ENCODE measurements at regions of chr12 and their contacts with region 1.

Region 1: GRCh38 chr12:71780237-71780822 is 25.7 kb downstream of the RAB21 start:
- DNase-seq: no peak
- H3K4me3 ChIP-seq: no peak overlapping the region
- CTCF ChIP-seq: peak; percentile 41

Region 2: DNA sequence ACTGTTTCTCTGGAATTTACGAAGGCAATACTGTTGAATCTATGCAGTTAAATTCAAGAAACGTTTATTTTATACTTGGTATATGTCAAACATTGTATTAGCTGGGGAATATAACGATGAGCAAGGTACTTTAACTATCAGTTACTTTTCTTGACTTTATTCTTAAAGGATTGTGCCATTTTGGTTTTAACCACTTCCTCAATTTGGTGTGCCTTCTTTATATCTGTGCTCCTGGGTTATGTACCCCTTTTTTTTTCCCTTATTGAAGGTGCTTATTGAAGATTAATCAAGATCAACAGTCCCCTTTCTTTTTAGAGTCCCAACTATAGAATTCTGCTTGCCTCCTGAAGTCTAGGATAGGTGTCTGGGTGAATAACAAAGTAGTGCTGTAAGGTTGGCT is 19.9 kb before region 1 on chr12:
- CTCF ChIA-PET with region 1: interaction called, 20 read pairs
- POLR2A ChIA-PET with region 1: interaction called, 3 read pairs
- DNase-seq: no peak
- H3K4me3 ChIP-seq: no peak overlapping the region
- CTCF ChIP-seq: no peak

Region 3: GRCh38 chr12:71799106-71799505 is 18.8 kb after region 1 on chr12:
- CTCF ChIA-PET with region 1: interaction called, 31 read pairs
- POLR2A ChIA-PET with region 1: no interaction called
- DNase-seq: no peak
- H3K4me3 ChIP-seq: no peak overlapping the region
- CTCF ChIP-seq: no peak

Region 4: DNA sequence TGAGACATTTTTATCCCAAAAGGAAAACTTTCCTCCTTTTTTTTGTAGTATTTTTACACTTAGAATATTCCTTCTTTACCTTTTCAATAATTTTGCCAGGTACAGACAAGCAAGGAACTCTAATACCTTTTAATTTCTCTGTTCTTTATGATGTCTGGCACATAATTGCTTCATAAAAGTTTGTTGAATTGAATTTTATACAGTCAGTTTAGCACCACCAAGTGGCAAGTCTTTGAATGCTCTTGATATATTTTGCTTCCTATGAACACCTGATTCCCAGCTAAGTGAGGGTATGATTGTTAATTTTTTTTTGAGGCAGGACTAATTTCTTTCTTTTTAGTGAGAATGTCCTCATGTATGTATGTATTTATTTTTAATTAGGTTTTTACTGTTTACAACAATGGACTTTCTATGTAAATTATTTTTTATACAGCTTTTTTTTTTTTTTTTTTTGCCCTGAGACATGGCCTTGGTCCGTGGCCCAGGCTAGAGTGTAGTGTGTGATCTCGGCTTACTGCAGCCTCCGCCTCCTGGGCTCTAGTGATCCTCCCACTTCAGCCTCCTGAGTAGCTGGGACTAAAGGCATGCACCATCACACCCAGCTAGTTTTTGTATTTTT is 66.1 kb after region 1 on chr12:
- CTCF ChIA-PET with region 1: interaction called, 43 read pairs
- POLR2A ChIA-PET with region 1: no interaction called
- DNase-seq: no peak
- H3K4me3 ChIP-seq: no peak overlapping the region
- CTCF ChIP-seq: peak; percentile 21

Region 5: DNA sequence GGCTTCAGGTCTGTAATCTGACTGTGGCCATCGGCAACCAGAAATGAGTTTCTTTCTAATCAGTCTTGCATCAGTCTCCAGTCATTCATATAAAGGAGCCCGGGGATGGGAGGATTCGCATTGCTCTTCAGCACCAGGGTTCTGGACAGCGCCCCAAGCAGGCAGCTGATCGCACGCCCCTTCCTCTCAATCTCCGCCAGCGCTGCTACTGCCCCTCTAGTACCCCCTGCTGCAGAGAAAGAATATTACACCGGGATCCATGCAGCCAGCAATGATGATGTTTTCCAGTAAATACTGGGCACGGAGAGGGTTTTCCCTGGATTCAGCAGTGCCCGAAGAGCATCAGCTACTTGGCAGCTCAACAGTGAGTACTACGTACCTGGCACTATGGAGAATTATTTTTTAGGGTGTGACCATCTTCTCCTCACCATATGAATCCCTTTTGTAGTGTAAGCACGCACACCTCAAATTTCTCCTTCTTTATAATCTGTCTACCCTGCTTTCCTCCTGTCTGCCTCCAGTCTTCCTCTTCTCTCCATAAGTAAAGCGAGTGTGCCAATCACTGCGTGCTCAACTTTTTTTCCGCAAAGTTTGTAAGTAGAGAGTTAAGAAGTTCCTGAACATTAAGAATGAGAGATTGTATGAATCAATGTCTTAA is 158.5 kb after region 1 on chr12 and contains the start of gene TPH2:
- CTCF ChIA-PET with region 1: interaction called, 34 read pairs
- POLR2A ChIA-PET with region 1: no interaction called
- DNase-seq: no peak
- H3K4me3 ChIP-seq: no peak within 1 kb of the TSS
- CTCF ChIP-seq: peak; percentile 63

Measured in AG04449 (cell line).